ENCODE measurements at regions of chr14 and their contacts with region 1.

Region 1: DNA sequence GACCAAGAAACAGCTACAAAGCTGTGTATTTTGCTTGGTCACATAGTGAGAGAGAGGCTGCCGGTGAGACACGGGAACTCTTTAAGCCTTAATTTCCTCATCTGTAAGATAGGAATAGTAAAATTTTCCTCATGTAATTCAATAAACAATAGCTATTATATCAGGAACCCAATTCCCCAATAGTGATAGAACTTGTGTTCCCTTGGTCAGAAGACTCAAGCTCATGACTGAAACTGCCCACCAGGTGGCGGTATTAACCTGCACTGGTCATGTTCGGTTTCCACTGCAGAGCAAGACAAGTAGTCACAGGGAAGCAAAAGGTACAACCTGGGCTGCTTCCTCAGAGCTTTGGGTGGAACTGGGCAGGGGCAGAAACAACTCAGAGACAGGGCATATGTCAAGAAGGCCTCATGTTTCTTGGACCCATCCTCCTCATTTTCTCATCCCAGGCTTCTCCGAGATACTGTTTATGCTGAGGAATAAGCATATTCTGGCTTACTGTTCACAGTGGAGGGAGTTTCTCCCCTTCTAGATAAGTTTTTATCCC is 4.2 kb upstream of the AJUBA start:
- DNase-seq: peak; percentile 95
- ATAC-seq: peak; percentile 61
- H3K4me3 Mint-ChIP-seq: no peak overlapping the region
- H3K27ac Mint-ChIP-seq: no peak overlapping the region
- H3K4me1 Mint-ChIP-seq: no peaks in the 10 kb centered on the region
- H3K27me3 Mint-ChIP-seq: no peaks in the 10 kb centered on the region
- CTCF ChIP-seq: peak; percentile 94

Region 2: DNA sequence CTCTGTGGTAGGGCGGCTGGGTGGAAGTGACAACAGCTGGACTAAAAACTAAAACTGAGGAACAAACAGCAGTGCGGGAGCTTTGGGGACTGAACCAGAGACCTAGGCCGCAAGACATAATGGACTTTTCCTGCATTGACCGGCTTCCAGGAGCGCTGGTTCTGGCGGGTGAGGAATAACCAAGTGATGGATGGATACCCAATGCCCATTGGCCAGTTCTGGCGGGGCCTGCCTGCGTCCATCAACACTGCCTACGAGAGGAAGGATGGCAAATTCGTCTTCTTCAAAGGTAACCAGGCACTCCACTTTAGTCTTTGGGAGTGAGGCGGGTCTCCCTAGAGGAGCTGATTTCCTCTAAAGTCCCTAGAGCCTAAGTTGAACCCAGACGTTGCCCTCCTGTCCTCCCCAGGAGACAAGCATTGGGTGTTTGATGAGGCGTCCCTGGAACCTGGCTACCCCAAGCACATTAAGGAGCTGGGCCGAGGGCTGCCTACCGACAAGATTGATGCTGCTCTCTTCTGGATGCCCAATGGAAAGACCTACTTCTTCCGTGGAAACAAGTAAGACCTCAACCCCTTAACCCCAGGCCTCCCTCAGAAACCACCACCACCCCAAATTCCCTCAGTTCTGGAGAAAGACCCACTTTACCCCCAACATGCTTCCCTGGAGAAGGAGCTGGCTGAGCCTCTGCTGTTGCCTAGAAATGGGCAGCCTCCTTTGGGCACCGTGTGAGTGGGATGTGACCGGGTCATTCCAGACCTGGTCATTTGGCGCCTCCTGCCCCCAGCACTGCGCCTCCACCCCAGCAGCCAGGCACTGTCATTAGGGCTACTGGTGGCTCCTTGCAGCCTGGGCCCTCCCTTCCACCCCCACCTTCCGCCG is 142.1 kb before region 1 on chr14:
- CTCF ChIA-PET with region 1: no interaction called
- POLR2A ChIA-PET with region 1: no interaction called
- intact Hi-C with region 1: no loop called
- DNase-seq: no peak
- ATAC-seq: no peak
- H3K4me3 Mint-ChIP-seq: no peak overlapping the region
- H3K27ac Mint-ChIP-seq: no peak overlapping the region
- H3K4me1 Mint-ChIP-seq: no peaks in the 10 kb centered on the region
- H3K27me3 Mint-ChIP-seq: peaks cover 14% of the 10 kb centered on the region
- CTCF ChIP-seq: no peak

Region 3: GRCh38 chr14:22939684-22940083 is 46.9 kb before region 1 on chr14:
- CTCF ChIA-PET with region 1: interaction called, 12 read pairs
- POLR2A ChIA-PET with region 1: interaction called, 7 read pairs
- intact Hi-C with region 1: no loop called
- DNase-seq: no peak
- ATAC-seq: no peak
- H3K4me3 Mint-ChIP-seq: no peak overlapping the region
- H3K27ac Mint-ChIP-seq: no peak overlapping the region
- H3K4me1 Mint-ChIP-seq: no peaks in the 10 kb centered on the region
- H3K27me3 Mint-ChIP-seq: no peaks in the 10 kb centered on the region
- CTCF ChIP-seq: no peak

Region 4: DNA sequence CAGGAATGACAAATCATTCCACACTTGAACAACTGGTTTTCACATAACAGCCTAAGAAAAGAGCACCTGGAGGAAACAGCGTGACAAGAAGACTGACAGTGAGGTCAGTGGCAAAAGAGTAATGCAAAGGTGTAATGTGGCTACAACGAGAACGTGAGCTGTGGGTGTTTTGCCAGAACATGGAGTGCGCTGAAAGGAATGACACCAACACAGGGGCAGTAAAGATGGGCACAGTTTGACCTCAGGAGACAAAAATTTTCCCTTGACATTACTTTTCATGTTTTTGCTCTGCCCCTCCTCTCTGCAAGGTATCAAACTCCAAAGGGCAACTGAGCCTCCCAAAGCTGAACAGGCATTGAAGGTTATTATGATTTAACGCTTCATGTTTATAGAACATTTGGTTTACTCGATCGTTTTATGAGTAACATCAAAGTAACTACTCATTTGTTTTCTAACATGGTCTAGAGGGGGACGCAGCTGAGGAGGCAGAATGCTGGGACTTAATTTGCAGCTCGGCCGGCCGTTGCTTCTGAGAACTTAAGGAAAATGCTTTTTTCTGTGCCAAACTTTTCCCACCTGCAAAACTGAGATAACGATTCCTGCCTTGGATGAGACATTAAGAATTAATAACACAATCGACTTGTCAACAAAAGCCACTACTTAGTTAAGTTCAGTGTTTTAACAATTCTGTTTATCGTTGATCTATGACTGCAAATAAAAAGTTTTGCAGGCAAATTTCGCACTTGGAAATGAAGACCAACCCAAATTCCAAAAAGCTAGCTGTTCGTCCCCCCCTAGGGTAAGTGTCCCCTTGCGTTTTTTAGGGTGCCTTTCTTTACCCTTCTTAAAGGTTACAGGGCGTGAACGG is 30.6 kb before region 1 on chr14:
- CTCF ChIA-PET with region 1: interaction called, 22 read pairs
- POLR2A ChIA-PET with region 1: interaction called, 9 read pairs
- intact Hi-C with region 1: no loop called
- DNase-seq: no peak
- ATAC-seq: no peak
- H3K4me3 Mint-ChIP-seq: peak overlapping the region; percentile 93
- H3K27ac Mint-ChIP-seq: peak overlapping the region; percentile 93
- H3K4me1 Mint-ChIP-seq: peaks cover 25% of the 10 kb centered on the region
- H3K27me3 Mint-ChIP-seq: no peaks in the 10 kb centered on the region
- CTCF ChIP-seq: no peak

Region 5: DNA sequence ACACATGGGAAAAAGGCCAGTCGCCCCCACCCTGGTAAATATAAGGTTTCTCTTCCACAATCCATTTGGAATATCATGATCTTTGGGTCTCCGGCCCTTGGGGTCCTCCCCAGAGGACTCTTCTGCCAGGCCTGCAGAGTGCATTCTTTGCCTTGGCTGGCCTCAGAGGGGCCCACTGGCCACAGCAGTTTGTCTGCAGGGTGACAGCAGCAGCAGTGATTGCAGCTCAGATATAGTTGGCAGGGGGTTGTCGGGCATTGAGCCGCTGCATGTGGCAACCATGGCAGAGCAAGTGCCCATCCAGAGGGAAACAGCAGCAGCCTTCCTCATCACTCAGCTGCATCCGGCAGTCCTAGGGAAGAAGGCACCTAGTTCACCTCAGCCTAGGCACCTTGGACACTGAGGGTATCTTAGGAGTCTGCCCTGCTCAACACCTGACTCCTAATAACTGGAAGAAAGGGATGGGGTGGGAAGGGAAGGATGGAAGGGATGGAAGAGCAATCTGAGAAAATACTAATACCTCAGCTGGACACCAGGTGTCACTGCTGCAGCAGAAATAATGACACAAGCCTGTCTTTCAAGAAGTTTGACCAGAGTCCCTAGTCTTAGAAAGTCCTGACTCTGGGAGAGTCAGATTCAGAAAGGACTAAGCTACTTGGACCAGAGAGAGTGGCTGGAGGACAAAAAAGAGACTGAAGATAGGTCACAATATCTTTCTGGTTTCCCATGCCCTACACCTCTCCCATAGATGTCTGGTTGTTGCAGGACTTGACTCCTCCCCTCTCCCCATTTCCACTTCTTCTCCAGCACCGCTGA is 13.2 kb before region 1 on chr14:
- CTCF ChIA-PET with region 1: interaction called, 209 read pairs
- POLR2A ChIA-PET with region 1: interaction called, 6 read pairs
- intact Hi-C with region 1: no loop called
- DNase-seq: peak; percentile 56
- ATAC-seq: peak; percentile 69
- H3K4me3 Mint-ChIP-seq: no peak overlapping the region
- H3K27ac Mint-ChIP-seq: no peak overlapping the region
- H3K4me1 Mint-ChIP-seq: no peaks in the 10 kb centered on the region
- H3K27me3 Mint-ChIP-seq: no peaks in the 10 kb centered on the region
- CTCF ChIP-seq: peak; percentile 80

Region 6: DNA sequence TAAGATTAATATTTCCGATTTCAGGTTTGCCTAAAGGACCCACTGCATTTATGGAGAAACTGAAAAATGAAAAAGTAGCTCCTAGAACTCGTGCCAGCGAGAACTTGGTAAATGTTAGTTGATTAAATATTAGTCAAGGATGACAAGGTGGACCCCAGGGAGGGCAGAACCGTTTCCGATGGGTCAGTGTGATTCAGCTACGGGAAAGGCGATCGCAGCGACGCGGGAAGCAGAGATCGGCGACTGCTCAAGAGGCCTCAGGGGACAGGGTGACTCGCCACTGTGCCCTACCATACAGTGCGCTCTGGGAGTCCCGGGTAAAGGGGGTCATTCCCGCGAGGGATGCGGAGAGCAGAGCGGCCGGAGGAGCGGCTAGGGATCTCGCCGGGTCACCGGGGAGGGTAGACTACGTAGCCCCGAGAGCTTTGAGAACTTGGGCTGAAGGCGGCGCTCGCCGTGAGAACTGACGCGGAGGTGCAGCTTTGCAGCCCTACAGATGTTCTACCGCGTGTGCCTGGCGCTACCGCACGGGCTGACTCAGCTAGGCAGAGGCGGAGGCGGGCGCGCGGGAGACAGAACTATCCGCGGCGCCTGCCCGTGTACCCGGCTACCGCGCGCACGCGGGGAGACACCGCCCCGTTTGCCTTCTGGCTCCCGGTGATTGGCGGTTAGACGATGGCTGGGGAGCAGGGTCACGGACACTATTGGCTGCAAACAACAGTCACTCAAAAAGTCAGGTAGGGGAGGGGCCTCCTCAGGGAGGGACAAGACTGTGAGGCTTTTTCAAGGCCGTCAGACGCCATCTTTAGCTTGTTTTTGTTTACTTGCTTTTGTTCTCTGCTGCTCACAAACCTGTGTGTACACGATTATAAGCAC is 20.2 kb after region 1 on chr14:
- CTCF ChIA-PET with region 1: interaction called, 61 read pairs
- POLR2A ChIA-PET with region 1: interaction called, 6 read pairs
- intact Hi-C with region 1: no loop called
- DNase-seq: peak; percentile 98
- ATAC-seq: peak; percentile 96
- H3K4me3 Mint-ChIP-seq: peak overlapping the region; percentile 91
- H3K27ac Mint-ChIP-seq: peak overlapping the region; percentile 97
- H3K4me1 Mint-ChIP-seq: peaks cover 34% of the 10 kb centered on the region
- H3K27me3 Mint-ChIP-seq: no peaks in the 10 kb centered on the region
- CTCF ChIP-seq: peak; percentile 39

Region 7: GRCh38 chr14:23034483-23035302 is 48.1 kb after region 1 on chr14 and contains the start of gene PSMB5:
- CTCF ChIA-PET with region 1: interaction called, 14 read pairs
- POLR2A ChIA-PET with region 1: interaction called, 10 read pairs
- intact Hi-C with region 1: no loop called
- DNase-seq: peak; percentile 96
- ATAC-seq: peak; percentile 96
- H3K4me3 Mint-ChIP-seq: peak within 1 kb of the TSS; percentile 92
- H3K27ac Mint-ChIP-seq: peak within 1 kb of the TSS; percentile 98
- H3K4me1 Mint-ChIP-seq: peaks cover 31% of the 10 kb centered on the region
- H3K27me3 Mint-ChIP-seq: no peaks in the 10 kb centered on the region
- CTCF ChIP-seq: no peak
- total RNA-seq, gene PSMB5: 119 to 120 TPM

Region 8: GRCh38 chr14:23076785-23077408 is 90.3 kb after region 1 on chr14:
- CTCF ChIA-PET with region 1: interaction called, 60 read pairs
- POLR2A ChIA-PET with region 1: no interaction called
- intact Hi-C with region 1: no loop called
- DNase-seq: peak; percentile 39
- ATAC-seq: peak; percentile 70
- H3K4me3 Mint-ChIP-seq: no peak overlapping the region
- H3K27ac Mint-ChIP-seq: no peak overlapping the region
- H3K4me1 Mint-ChIP-seq: peaks cover 9% of the 10 kb centered on the region
- H3K27me3 Mint-ChIP-seq: no peaks in the 10 kb centered on the region
- CTCF ChIP-seq: peak; percentile 70

Measured in activated CD8-positive, alpha-beta T cell treated with anti-CD3 and anti-CD28 coated beads for 36 hours (primary cell).